CD14-positive monocyte (primary cell): ENCODE measurements at regions of chr7 and their contacts with region 1.

Region 1: DNA sequence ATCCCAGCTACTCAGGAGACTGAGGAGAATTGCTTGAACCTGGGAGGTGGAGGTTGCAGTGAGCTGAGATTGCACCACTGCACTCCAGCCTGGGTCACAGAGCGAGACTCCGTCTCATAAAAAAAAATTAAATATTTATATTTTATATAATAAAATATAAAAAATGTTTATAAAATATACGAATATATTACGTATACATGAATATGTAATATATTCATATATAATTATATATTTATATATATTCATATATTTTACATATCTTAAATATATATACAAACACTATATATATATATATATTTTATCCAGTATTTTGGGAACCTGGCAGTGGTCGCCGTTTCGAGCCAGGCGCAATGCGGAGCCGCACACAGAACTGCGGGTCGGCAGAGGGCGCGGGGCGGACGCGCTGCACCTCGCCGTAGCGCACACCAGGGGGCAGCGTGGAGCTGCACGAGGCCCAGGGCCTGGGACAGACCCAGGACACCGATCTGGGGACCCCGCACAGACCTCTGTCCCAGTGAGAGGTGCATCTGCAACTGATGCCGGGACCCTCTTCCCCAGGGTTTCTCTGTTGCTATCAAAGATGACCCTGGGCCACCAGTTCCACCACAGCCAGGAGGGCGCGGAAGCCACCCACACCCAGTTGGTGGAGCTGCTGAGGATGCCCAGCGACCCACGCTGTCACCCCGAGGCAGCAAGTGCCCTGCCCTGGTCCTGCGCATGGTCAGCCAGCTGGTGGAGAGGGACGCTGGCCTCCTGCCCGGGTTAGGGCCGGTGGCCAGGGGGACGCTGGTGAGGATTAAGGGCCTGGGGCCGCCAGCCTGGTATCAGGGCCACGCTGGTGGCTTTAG is 22.7 kb downstream of the AP5Z1 start:
- DNase-seq: peak; percentile 30 to 53 (median 36)
- H3K4me3 ChIP-seq: no peak overlapping the region
- H3K4me3 Mint-ChIP-seq: no peak overlapping the region
- H3K27ac ChIP-seq: no peak overlapping the region
- H3K27ac Mint-ChIP-seq: no peak overlapping the region
- H3K4me1 ChIP-seq: no peaks in the 10 kb centered on the region
- H3K4me1 Mint-ChIP-seq: peaks cover 3% of the 10 kb centered on the region
- H3K27me3 ChIP-seq: no peaks in the 10 kb centered on the region
- H3K27me3 Mint-ChIP-seq: peaks cover 0 to 2% (median 1%) of the 10 kb centered on the region in 3 donors
- CTCF ChIP-seq: peak; percentile 98

Region 2: DNA sequence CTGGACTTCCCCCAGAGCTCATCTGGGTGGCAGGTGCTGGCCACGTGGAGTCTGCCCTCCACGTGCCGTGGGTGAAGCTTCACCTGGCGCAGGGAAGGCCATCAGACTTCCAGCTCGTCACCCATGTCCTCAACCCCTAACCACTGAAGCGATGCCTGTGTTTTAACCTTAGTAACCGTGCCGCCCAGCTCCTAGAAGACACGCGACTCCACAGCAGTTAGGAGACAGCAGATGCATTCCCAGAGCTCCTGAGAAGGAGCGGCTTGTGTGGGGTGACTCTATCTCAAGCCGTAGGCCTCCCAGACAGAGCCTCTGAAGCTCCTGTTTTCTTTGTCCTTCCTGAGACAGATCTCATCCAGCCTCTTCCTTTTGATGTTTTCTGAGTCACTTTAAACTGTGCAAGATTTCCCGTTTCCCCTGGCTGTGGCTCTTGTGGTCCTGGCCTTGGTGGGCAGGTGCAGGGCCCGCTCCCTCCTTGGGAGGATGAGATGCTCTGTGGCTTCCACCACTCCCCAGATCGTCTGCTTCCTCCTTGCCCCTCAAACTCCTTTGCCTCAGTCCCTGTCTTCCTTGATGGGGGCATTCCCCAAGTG is 64.0 kb before region 1 on chr7:
- intact Hi-C with region 1: no loop called
- DNase-seq: no peak
- H3K4me3 ChIP-seq: no peak overlapping the region
- H3K4me3 Mint-ChIP-seq: no peak overlapping the region
- H3K27ac ChIP-seq: peak overlapping the region in 1 of 2 donors; percentile 37
- H3K27ac Mint-ChIP-seq: peak overlapping the region in 6 of 7 donors; percentile 10 to 50 (median 38)
- H3K4me1 ChIP-seq: peaks cover 25 to 39% of the 10 kb centered on the region in 2 donors
- H3K4me1 Mint-ChIP-seq: peaks cover 50% of the 10 kb centered on the region
- H3K27me3 ChIP-seq: no peaks in the 10 kb centered on the region
- H3K27me3 Mint-ChIP-seq: no peaks in the 10 kb centered on the region
- CTCF ChIP-seq: no peak

Region 3: GRCh38 chr7:5083311-5083711 is 285.2 kb after region 1 on chr7:
- intact Hi-C with region 1: loop called (anchors 2 kb)
- DNase-seq: no peak
- H3K4me3 ChIP-seq: no peak overlapping the region
- H3K4me3 Mint-ChIP-seq: no peak overlapping the region
- H3K27ac ChIP-seq: no peak overlapping the region
- H3K27ac Mint-ChIP-seq: peak overlapping the region in 1 of 7 donors; percentile 38
- H3K4me1 ChIP-seq: peaks cover 0 to 5% of the 10 kb centered on the region in 2 donors
- H3K4me1 Mint-ChIP-seq: peaks cover 7% of the 10 kb centered on the region
- H3K27me3 ChIP-seq: no peaks in the 10 kb centered on the region
- H3K27me3 Mint-ChIP-seq: peaks cover 28 to 32% (median 30%) of the 10 kb centered on the region in 3 donors
- CTCF ChIP-seq: no peak